Natural killer cell (primary cell): ENCODE measurements at regions of chr3 and their contacts with region 1.

Region 1: GRCh38 chr3:9302425-9303181 is 53.2 kb upstream of the SRGAP3 start:
- DNase-seq: peak; percentile 66 to 88
- ATAC-seq: peak; percentile 86 to 98 (median 98)
- H3K4me3 ChIP-seq: no peak overlapping the region
- H3K4me3 Mint-ChIP-seq: peak overlapping the region; percentile 9
- H3K27ac ChIP-seq: no peak overlapping the region
- H3K27ac Mint-ChIP-seq: no peak overlapping the region
- H3K4me1 ChIP-seq: peaks cover 5% of the 10 kb centered on the region
- H3K4me1 Mint-ChIP-seq: peaks cover 0 to 12% of the 10 kb centered on the region in 2 donors
- H3K27me3 ChIP-seq: no peaks in the 10 kb centered on the region
- H3K27me3 Mint-ChIP-seq: peaks cover 7 to 12% of the 10 kb centered on the region in 2 donors
- CTCF ChIP-seq: peak; percentile 93

Region 2: GRCh38 chr3:8970971-8971589 is 331.5 kb before region 1 on chr3:
- intact Hi-C with region 1: loop called (anchors 1 kb)
- DNase-seq: peak; percentile 63 to 88
- ATAC-seq: peak; percentile 85 to 95 (median 92)
- H3K4me3 ChIP-seq: no peak overlapping the region
- H3K4me3 Mint-ChIP-seq: no peak overlapping the region
- H3K27ac ChIP-seq: no peak overlapping the region
- H3K27ac Mint-ChIP-seq: no peak overlapping the region
- H3K4me1 ChIP-seq: peaks cover 5% of the 10 kb centered on the region
- H3K4me1 Mint-ChIP-seq: peaks cover 5% of the 10 kb centered on the region in 2 donors
- H3K27me3 ChIP-seq: peaks cover 3% of the 10 kb centered on the region
- H3K27me3 Mint-ChIP-seq: peaks cover 16 to 32% of the 10 kb centered on the region in 2 donors
- CTCF ChIP-seq: peak; percentile 99

Region 3: GRCh38 chr3:8987645-8988383 is 314.8 kb before region 1 on chr3:
- intact Hi-C with region 1: loop called (anchors 1 kb)
- DNase-seq: peak; percentile 35 to 76
- ATAC-seq: peak; percentile 79 to 94 (median 92)
- H3K4me3 ChIP-seq: no peak overlapping the region
- H3K4me3 Mint-ChIP-seq: peak overlapping the region; percentile 6
- H3K27ac ChIP-seq: no peak overlapping the region
- H3K27ac Mint-ChIP-seq: no peak overlapping the region
- H3K4me1 ChIP-seq: peaks cover 5% of the 10 kb centered on the region
- H3K4me1 Mint-ChIP-seq: no peaks in the 10 kb centered on the region
- H3K27me3 ChIP-seq: no peaks in the 10 kb centered on the region
- H3K27me3 Mint-ChIP-seq: no peaks in the 10 kb centered on the region
- CTCF ChIP-seq: peak; percentile 64